GM10248 (cell line): ENCODE measurements at regions of chr1 and their contacts with region 1.

Region 1: DNA sequence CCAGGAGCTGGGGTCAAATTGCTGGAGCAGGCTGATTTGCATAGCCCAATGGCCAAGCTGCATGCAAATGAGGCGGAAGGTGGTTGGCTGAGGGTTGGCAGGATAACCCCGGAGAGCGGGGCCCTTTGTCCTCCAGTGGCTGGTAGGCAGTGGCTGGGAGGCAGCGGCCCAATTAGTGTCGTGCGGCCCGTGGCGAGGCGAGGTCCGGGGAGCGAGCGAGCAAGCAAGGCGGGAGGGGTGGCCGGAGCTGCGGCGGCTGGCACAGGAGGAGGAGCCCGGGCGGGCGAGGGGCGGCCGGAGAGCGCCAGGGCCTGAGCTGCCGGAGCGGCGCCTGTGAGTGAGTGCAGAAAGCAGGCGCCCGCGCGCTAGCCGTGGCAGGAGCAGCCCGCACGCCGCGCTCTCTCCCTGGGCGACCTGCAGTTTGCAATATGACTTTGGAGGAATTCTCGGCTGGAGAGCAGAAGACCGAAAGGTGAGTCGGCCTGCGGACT is at the start of gene GADD45A:
- DNase-seq: peak; percentile 96
- CTCF ChIP-seq: no peak

Region 2: GRCh38 chr1:67515324-67516080 is 169.6 kb before region 1 on chr1:
- CTCF ChIA-PET with region 1: no interaction called
- POLR2A ChIA-PET with region 1: no interaction called
- DNase-seq: no peak
- CTCF ChIP-seq: no peak

Region 3: GRCh38 chr1:67664048-67664447 is 21.1 kb before region 1 on chr1:
- CTCF ChIA-PET with region 1: no interaction called
- POLR2A ChIA-PET with region 1: no interaction called
- DNase-seq: no peak
- CTCF ChIP-seq: no peak

Region 4: DNA sequence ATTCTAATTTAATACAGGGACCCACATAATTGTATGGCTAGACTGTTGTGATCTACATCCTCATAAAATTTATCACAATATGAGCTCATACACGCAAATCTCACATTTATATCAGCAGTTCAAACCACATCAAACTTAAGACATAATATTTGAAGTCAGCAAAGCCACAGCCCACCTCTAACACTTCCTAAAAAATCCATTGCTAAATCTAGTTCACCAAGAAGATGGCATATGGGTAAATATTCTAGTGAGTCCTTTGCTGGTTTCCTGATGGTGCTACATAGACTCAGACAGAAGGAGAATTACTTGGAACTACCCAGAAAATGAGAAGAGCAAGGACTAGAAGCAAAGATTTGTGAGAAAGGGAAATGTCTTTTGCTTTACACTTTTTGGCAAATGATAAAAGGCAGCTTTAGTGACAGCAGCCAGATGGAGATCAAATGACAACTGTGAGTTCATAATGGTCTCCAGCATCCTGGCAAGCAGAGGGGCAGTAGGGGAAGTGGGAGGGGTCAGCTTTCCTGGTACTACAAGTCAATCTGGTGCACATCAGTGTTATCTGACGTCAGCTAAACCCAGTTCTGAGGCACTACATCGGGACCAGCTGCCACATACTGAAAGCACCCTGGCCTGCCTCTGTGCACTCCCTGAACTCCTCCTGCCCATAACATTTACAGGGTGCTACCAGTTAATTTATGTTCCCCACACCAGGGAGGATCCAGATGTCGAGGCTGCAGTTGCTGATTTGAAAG is 10.7 kb before region 1 on chr1:
- CTCF ChIA-PET with region 1: interaction called, 6 read pairs
- POLR2A ChIA-PET with region 1: interaction called, 14 read pairs
- DNase-seq: no peak
- CTCF ChIP-seq: no peak